ENCODE measurements at regions of chr4 and their contacts with region 1.

Region 1: GRCh38 chr4:39732728-39733127 is 34.8 kb downstream of the UBE2K start:
- DNase-seq: no peak
- ATAC-seq: no peak
- H3K4me3 ChIP-seq: no peak overlapping the region
- H3K4me3 Mint-ChIP-seq: no peak overlapping the region
- H3K27ac ChIP-seq: no peak overlapping the region
- H3K27ac Mint-ChIP-seq: no peak overlapping the region
- H3K4me1 ChIP-seq: peaks cover 3% of the 10 kb centered on the region
- H3K4me1 Mint-ChIP-seq: peaks cover 30% of the 10 kb centered on the region
- H3K27me3 ChIP-seq: no peaks in the 10 kb centered on the region
- H3K27me3 Mint-ChIP-seq: no peaks in the 10 kb centered on the region
- CTCF ChIP-seq: no peak

Region 2: DNA sequence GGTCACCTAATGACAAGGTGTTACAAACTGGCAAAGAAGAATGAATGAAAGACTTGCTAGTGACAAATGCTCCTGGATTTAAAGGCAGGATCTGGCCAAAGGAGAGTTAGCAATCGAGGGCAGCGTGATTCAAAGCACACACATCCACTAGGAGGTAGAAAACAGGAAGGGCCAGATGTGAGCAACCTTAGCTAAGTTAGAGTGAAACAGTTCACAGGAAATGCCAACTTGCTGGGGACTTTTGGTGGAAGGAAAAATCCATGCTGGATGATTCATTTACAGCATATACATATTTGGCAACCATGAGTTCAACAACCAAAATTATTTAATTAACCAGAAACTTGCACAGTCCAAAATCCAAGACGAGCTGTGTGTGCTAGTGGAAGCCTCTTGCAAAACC is 1495.6 kb before region 1 on chr4:
- CTCF ChIA-PET with region 1: no interaction called
- POLR2A ChIA-PET with region 1: no interaction called
- intact Hi-C with region 1: loop called in 1 of 2 experiments (anchors 10 kb)
- DNase-seq: peak in 2 of 14 experiments; percentile 21 to 42
- ATAC-seq: no peak
- H3K4me3 ChIP-seq: no peak overlapping the region
- H3K4me3 Mint-ChIP-seq: no peak overlapping the region
- H3K27ac ChIP-seq: no peak overlapping the region
- H3K27ac Mint-ChIP-seq: no peak overlapping the region
- H3K4me1 ChIP-seq: no peaks in the 10 kb centered on the region
- H3K4me1 Mint-ChIP-seq: peaks cover 7% of the 10 kb centered on the region
- H3K27me3 ChIP-seq: no peaks in the 10 kb centered on the region
- H3K27me3 Mint-ChIP-seq: no peaks in the 10 kb centered on the region
- CTCF ChIP-seq: no peak